Posterior vena cava (tissue), 2 donors: ENCODE measurements at regions of chr4 and their contacts with region 1.

Region 1: GRCh38 chr4:148589182-148589581 is 147.0 kb upstream of the NR3C2 start:
- DNase-seq: no peak

Region 2: GRCh38 chr4:148425327-148426110 is 163.7 kb before region 1 on chr4:
- intact Hi-C with region 1: no loop called
- DNase-seq: no peak

Region 3: DNA sequence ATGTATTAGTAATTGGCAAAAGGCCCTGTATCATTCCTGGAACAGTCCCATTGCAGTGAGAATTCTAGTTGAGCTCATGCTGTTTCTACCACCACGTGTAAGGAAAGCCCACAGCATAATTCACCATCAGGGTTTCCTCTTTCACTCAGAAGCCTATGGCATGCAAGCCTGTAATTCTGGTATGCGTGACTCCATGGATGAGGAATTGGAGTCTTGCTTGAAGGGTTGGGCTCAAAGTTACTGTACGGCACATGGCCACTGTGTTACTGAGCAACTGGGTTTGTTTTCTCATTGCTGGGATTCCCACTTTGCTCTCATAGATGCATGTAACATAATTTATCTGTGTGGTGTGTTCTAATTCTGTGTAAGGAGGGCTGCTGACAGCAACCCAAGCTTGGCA is 14.7 kb before region 1 on chr4:
- intact Hi-C with region 1: no loop called
- DNase-seq: no peak

Region 4: DNA sequence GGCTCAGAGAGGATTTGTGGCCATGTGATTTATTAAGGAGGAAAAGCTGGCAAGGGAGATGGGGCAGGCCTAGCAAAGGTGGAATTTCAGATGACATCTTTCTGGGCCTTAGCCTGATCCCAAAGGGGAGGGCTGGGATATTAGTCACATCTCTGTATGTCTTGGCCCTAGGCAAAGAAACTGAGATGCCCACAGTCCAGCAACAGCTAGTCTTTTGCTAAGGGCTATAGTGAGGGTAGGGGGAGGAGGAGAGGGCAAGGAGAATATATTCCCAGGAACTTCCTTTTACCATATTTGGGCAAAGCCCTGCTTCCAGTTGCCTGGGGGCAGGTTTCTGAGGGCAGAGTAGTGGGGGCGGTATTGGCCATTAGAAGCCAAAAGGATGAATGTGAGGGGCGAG is 62.8 kb after region 1 on chr4:
- intact Hi-C with region 1: loop called in 1 of 2 experiments (anchors 2 kb)
- DNase-seq: no peak